ENCODE measurements at regions of chr7 and their contacts with region 1.

Region 1: GRCh38 chr7:15326044-15326644 is 235.7 kb downstream of the AGMO start:
- DNase-seq: peak; percentile 2
- CTCF ChIP-seq: no peak

Region 2: DNA sequence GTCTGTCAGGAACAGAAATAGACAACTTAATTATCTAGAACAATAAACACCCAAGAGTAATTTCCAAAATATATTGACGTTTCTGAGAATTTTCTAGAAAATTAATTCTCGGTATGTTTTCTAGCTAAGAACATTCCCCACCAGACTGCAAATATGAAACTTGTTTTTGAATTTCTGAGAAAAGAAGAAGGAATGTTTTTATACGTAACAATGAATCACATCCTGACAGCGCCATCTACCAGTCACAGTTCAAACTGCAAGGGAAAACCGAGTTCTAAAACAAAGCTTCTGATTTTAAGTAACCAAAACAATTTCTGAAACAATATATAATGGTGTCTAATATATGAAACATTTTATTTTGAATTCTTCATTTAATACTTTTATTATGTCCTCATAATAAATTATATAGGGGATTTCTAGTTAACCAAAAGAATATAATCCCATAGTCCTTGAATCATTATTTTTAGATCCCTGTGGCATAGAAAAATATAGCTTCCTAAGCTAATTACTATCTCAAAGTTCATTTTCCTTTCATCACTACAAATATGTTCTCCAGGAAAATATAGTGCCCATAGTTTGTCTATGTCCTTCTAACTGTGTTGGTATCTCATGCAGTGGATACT is 394.8 kb after region 1 on chr7:
- CTCF ChIA-PET with region 1: interaction called, 17 read pairs
- POLR2A ChIA-PET with region 1: no interaction called
- DNase-seq: no peak
- CTCF ChIP-seq: peak; percentile 81